ENCODE measurements at regions of chr6 and their contacts with region 1.

Region 1: GRCh38 chr6:56637640-56638039 is 5.0 kb downstream of the DST start:
- DNase-seq: no peak
- H3K4me3 Mint-ChIP-seq: no peak overlapping the region
- H3K27ac Mint-ChIP-seq: no peak overlapping the region
- H3K4me1 Mint-ChIP-seq: no peaks in the 10 kb centered on the region
- H3K27me3 Mint-ChIP-seq: no peaks in the 10 kb centered on the region

Region 2: GRCh38 chr6:56699066-56699654 is 61.5 kb after region 1 on chr6:
- intact Hi-C with region 1: loop called (anchors 1 kb)
- DNase-seq: no peak
- H3K4me3 Mint-ChIP-seq: no peak overlapping the region
- H3K27ac Mint-ChIP-seq: no peak overlapping the region
- H3K4me1 Mint-ChIP-seq: no peaks in the 10 kb centered on the region
- H3K27me3 Mint-ChIP-seq: peaks cover 6% of the 10 kb centered on the region

Region 3: DNA sequence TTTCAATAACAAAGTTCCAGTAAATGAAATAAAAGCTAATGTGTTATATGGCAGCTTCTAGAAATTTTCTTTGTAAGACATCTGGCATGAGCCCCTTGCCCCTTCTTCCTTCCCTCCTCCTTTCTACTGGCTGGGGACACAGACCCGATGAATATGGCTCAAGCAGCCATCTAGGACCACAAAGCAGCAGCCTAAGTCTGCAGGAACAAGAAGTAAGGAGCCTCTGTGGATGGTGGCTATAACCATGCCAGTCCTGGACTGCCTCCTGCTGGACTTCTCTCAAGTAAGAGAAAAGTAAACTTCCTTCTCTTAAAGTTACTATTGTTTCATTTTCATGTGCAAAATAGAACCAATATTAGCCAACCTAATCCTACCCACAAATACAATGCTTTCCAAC is 119.9 kb after region 1 on chr6:
- intact Hi-C with region 1: loop called (anchors 10 kb)
- DNase-seq: no peak
- H3K4me3 Mint-ChIP-seq: no peak overlapping the region
- H3K27ac Mint-ChIP-seq: no peak overlapping the region
- H3K4me1 Mint-ChIP-seq: peaks cover 5% of the 10 kb centered on the region
- H3K27me3 Mint-ChIP-seq: no peaks in the 10 kb centered on the region

Region 4: GRCh38 chr6:56851541-56852259 is 214.1 kb after region 1 on chr6:
- intact Hi-C with region 1: loop called (anchors 2 kb)
- DNase-seq: peak; percentile 83
- H3K4me3 Mint-ChIP-seq: peak overlapping the region; percentile 85
- H3K27ac Mint-ChIP-seq: peak overlapping the region; percentile 81
- H3K4me1 Mint-ChIP-seq: peaks cover 25% of the 10 kb centered on the region
- H3K27me3 Mint-ChIP-seq: peaks cover 23% of the 10 kb centered on the region